Activated CD4-positive, alpha-beta T cell treated with anti-CD3 and anti-CD28 coated beads for 36 hours (primary cell): ENCODE measurements at regions of chr2 and their contacts with region 1.

Region 1: DNA sequence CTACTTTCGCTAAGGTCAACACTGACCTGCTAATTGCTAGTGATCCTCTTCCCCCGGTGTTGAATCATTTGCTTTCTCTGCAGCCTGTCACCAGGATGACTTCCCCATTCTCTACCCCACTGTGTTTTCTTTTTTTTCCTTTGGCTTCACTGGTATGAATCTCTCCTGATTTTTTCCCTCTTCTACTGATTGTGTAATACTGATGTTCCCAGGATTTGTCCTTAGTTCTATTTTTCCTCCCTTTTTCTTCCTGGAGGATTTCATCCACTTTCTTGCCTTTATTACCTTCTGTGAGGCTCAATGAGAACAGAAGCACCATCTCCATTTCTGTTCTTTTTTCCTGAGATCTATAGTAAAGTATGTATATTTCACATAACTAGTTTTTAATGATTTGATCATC is 14.1 kb upstream of the MSH2 start:
- DNase-seq: no peak
- ATAC-seq: no peak
- H3K4me3 Mint-ChIP-seq: no peak overlapping the region
- H3K27ac Mint-ChIP-seq: no peak overlapping the region
- H3K4me1 Mint-ChIP-seq: no peaks in the 10 kb centered on the region
- H3K27me3 Mint-ChIP-seq: peaks cover 10% of the 10 kb centered on the region

Region 2: DNA sequence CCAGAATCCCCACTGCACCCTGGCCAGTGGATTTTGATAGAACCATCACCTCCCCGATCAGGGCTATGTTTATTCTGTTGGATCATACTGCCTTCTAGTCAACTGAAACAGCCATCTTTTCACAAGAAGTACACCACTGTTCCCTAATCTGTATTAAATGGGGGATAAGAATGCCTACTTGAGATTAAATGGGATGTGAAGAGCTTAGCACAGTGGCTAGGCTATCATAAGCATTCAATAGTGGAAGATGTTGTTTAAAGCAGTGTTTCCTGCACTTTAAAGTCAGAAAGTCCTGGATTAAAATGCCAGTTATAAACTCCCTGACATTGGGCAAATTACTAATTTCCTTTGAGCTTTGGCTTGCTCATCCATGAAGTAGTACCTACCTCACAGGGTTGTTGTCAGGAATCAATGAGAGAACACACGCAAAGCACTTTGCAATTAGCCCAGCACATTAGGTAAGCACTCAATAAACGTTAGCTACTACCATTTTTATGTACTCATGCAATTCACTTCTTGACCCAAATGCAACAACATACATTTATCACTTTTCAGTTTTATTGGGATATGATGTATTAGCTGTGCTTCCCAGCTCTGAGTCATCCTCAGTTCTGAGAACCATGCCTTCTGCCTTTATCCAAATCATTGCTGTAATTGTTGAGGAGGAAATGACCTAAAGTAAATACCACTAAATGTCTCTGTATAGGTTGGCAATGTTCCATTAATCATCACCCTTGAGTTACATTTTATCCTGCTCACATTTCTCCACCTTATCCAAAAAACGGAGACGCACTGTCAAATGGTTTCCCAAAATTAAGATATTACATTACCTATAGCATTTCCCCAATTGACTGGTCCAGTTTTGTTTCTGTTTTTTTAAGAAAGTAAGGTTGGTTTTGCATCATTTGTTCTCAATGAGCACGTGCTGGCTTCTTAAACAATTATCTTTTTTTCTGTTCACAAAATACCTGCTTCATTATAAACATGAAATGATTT is 907.4 kb before region 1 on chr2:
- CTCF ChIA-PET with region 1: no interaction called
- POLR2A ChIA-PET with region 1: interaction called, 11 read pairs
- intact Hi-C with region 1: no loop called
- DNase-seq: no peak
- ATAC-seq: peak; percentile 60
- H3K4me3 Mint-ChIP-seq: no peak overlapping the region
- H3K27ac Mint-ChIP-seq: no peak overlapping the region
- H3K4me1 Mint-ChIP-seq: peaks cover 25% of the 10 kb centered on the region
- H3K27me3 Mint-ChIP-seq: peaks cover 3% of the 10 kb centered on the region

Region 3: GRCh38 chr2:47309952-47310800 is 78.7 kb before region 1 on chr2:
- CTCF ChIA-PET with region 1: no interaction called
- POLR2A ChIA-PET with region 1: no interaction called
- intact Hi-C with region 1: no loop called
- DNase-seq: no peak
- ATAC-seq: no peak
- H3K4me3 Mint-ChIP-seq: no peak overlapping the region
- H3K27ac Mint-ChIP-seq: no peak overlapping the region
- H3K4me1 Mint-ChIP-seq: no peaks in the 10 kb centered on the region
- H3K27me3 Mint-ChIP-seq: peaks cover under 1% of the 10 kb centered on the region

Region 4: DNA sequence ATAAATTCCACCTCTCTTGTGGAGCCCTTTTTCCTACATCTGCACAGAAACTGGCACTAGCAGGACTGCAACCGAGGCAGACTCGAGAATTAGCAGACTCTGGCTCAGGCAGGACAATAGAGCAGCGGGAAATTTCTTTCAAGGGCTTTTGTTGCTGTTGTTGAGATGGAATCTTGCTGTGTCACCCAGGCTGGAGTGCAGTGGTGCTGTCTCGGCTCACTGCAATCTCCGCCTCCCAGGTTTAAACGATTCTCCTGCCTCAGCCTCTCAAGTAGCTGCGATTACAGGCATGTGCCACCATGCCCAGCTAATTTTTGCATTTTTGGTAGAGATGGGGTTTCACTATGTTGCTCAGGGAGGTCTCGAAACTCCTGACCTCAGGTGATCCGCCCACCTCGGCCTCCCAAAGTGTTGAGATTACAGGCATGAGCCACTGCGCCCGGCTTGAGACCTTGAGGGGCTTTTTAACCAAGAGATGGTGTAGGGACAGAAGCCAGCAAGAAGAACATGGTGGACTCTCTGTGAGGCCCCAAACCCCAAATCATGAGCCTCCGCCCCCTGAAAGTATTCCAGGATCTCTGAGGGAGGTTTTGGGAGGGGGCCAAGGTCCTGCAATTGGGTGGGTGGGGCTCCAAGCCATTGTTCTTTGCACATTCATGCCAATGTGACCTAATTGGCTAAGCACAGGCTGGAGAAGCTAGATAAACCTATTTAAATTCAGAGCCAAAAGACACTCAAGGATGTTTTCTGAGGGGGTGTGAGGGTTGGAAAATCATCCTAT is 54.3 kb before region 1 on chr2:
- CTCF ChIA-PET with region 1: interaction called, 75 read pairs
- POLR2A ChIA-PET with region 1: interaction called, 4 read pairs
- intact Hi-C with region 1: loop called (anchors 1 kb)
- DNase-seq: no peak
- ATAC-seq: no peak
- H3K4me3 Mint-ChIP-seq: no peak overlapping the region
- H3K27ac Mint-ChIP-seq: no peak overlapping the region
- H3K4me1 Mint-ChIP-seq: no peaks in the 10 kb centered on the region
- H3K27me3 Mint-ChIP-seq: peaks cover 3% of the 10 kb centered on the region

Region 5: DNA sequence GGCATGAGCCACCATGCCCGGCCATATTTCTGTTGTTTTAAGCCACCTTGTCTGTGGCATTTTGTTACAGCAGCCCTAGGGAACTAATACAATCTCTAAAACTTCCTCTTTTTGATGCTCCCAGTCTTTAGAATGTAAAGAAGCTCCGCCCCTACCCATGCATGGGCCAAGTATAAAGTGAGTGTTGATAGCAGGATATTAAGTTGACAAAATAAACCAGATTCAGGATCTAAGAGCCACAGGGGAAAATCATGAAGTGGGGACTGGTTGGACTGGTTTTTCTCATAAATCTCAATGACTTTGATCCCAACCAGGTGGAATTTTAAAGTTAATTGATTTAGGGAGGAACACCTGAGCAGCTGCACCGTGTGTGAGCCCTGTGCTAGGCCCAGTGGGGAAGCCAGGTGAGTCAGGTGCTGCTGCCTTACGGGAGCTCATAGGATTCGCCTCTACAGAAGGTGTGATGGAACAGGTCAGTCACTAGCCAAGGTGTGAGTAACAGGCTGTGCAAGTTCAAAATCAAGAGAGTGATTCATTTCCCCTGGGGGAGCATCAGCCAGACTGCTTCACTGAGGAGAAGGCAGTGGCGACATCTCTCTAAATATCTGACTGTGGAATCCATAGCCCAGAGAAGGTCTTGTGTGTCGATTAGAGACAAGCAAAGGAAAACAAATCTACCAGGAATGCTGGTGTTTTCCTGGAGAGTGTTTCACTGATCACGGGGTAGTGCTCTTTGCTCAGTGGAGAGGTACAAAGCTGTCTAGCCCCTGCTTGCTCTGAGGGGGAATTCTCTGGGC is 48.9 kb before region 1 on chr2:
- CTCF ChIA-PET with region 1: interaction called, 75 read pairs
- POLR2A ChIA-PET with region 1: interaction called, 4 read pairs
- intact Hi-C with region 1: loop called (anchors 1 kb)
- DNase-seq: peak; percentile 59
- ATAC-seq: peak; percentile 96
- H3K4me3 Mint-ChIP-seq: no peak overlapping the region
- H3K27ac Mint-ChIP-seq: no peak overlapping the region
- H3K4me1 Mint-ChIP-seq: peaks cover 8% of the 10 kb centered on the region
- H3K27me3 Mint-ChIP-seq: peaks cover 8% of the 10 kb centered on the region

Region 6: DNA sequence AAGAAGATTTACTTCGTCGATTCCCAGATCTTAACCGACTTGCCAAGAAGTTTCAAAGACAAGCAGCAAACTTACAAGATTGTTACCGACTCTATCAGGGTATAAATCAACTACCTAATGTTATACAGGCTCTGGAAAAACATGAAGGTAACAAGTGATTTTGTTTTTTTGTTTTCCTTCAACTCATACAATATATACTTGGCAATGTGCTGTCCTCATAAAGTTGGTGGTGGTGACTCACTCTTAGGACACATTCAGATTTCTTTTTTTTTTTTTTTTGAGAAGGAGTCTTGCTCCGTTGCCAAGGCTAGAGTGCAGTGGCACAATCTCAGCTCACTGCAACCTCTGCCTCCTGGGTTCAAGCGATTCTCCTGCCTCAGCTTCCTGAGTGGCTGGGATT is 40.9 kb after region 1 on chr2:
- CTCF ChIA-PET with region 1: no interaction called
- POLR2A ChIA-PET with region 1: no interaction called
- intact Hi-C with region 1: no loop called
- DNase-seq: no peak
- ATAC-seq: no peak
- H3K4me3 Mint-ChIP-seq: no peak overlapping the region
- H3K27ac Mint-ChIP-seq: no peak overlapping the region
- H3K4me1 Mint-ChIP-seq: no peaks in the 10 kb centered on the region
- H3K27me3 Mint-ChIP-seq: no peaks in the 10 kb centered on the region